Panc1 (cell line): ENCODE measurements at regions of chr2 and their contacts with region 1.

Region 1: GRCh38 chr2:174522553-174522952 is 35.7 kb upstream of the GPR155 start:
- DNase-seq: no peak
- ATAC-seq: no peak
- H3K4me3 ChIP-seq: no peak overlapping the region
- H3K27ac ChIP-seq: no peak overlapping the region
- H3K4me1 ChIP-seq: no peaks in the 10 kb centered on the region
- H3K27me3 ChIP-seq: peaks cover 16% of the 10 kb centered on the region
- CTCF ChIP-seq: peak; percentile 52; the same call in 1 of the 2 replicates

Region 2: DNA sequence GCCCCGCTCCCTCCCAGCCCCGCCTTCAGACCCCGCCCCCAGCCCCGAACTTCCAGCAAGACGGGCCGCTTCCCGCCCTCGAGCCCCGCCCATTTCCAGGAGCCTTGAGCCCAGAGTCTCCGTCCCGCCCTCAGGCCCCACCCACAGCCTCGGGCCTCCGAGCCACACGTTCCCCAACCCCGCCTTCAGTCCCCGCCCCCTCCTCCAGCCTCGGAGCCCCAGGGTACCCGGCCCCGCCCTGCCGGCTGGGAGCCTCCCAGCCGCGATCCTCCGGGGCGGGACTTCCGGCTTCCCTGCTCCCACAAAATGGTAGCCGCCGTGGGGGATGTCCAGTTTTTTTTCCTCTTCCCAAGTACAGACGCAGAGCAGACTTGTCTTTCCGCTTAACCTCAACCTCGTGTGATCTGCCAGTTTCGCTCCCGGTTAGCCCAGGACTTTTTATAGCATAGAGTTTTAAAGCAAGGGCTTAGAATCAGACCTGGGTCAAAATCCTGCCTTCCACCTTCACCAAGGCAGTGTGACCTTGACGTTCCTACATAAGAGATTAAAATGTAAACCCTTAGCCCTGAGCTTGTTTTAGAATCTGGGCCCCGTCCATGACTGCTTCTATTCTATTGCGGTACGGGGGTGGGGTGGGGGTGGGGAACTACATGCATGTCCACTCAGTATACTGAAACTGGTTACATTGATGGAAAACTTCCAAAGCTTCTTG is 35.3 kb before region 1 on chr2:
- CTCF ChIA-PET with region 1: no interaction called
- POLR2A ChIA-PET with region 1: no interaction called
- in situ Hi-C with region 1: loop called (anchors 5 kb)
- intact Hi-C with region 1: no loop called
- DNase-seq: peak; percentile 75
- ATAC-seq: peak; percentile 98
- H3K4me3 ChIP-seq: peak overlapping the region; percentile 75 to 90
- H3K27ac ChIP-seq: peak overlapping the region; percentile 91
- H3K4me1 ChIP-seq: no peaks in the 10 kb centered on the region
- H3K27me3 ChIP-seq: no peaks in the 10 kb centered on the region
- CTCF ChIP-seq: no peak